ENCODE measurements at regions of chr5 and their contacts with region 1.

Region 1: DNA sequence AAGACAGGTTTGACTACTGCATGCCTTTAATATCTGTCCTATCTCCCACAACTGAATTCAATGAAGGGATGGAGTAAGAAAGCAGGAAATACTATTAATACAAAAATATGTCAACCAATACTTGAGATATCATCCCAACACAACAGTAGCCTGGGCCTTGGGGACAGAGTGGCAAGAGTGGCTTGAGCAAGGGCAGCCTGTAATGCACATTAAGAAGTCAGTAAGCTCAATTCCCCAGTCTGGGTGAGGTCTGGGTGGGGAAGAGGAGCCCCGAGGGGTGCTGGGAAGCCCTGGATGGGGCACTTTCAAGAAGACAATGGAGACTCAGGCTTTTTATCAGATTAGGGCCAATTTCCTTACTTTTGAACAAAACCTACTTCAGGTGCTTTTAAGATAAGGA is 25.1 kb downstream of the CARD6 start:
- DNase-seq: no peak
- ATAC-seq: no peak
- H3K4me3 ChIP-seq: no peak overlapping the region
- H3K4me3 Mint-ChIP-seq: no peak overlapping the region
- H3K27ac ChIP-seq: no peak overlapping the region
- H3K27ac Mint-ChIP-seq: no peak overlapping the region
- H3K4me1 ChIP-seq: no peaks in the 10 kb centered on the region
- H3K4me1 Mint-ChIP-seq: no peaks in the 10 kb centered on the region
- H3K27me3 ChIP-seq: no peaks in the 10 kb centered on the region
- H3K27me3 Mint-ChIP-seq: no peaks in the 10 kb centered on the region

Region 2: GRCh38 chr5:40842351-40842750 is 23.9 kb before region 1 on chr5:
- CTCF ChIA-PET with region 1: interaction called in 1 of 2 experiments, 5 read pairs
- POLR2A ChIA-PET with region 1: interaction called in 1 of 2 experiments, 11 read pairs
- DNase-seq: no peak
- ATAC-seq: no peak
- H3K4me3 ChIP-seq: no peak overlapping the region
- H3K4me3 Mint-ChIP-seq: peak overlapping the region in 1 of 3 donors; percentile 79
- H3K27ac ChIP-seq: no peak overlapping the region
- H3K27ac Mint-ChIP-seq: no peak overlapping the region
- H3K4me1 ChIP-seq: peaks cover 0 to 2% of the 10 kb centered on the region in 2 experiments
- H3K4me1 Mint-ChIP-seq: peaks cover 19 to 38% (median 24%) of the 10 kb centered on the region in 3 donors
- H3K27me3 ChIP-seq: peaks cover 0 to 3% of the 10 kb centered on the region in 2 experiments
- H3K27me3 Mint-ChIP-seq: peaks cover 4 to 10% of the 10 kb centered on the region in 2 donors

Region 3: GRCh38 chr5:40928886-40929448 is 62.7 kb after region 1 on chr5:
- CTCF ChIA-PET with region 1: no interaction called
- POLR2A ChIA-PET with region 1: no interaction called
- DNase-seq: no peak
- ATAC-seq: no peak
- H3K4me3 ChIP-seq: no peak overlapping the region
- H3K4me3 Mint-ChIP-seq: no peak overlapping the region
- H3K27ac ChIP-seq: no peak overlapping the region
- H3K27ac Mint-ChIP-seq: no peak overlapping the region
- H3K4me1 ChIP-seq: no peaks in the 10 kb centered on the region
- H3K4me1 Mint-ChIP-seq: no peaks in the 10 kb centered on the region
- H3K27me3 ChIP-seq: peaks cover 0 to 11% of the 10 kb centered on the region in 2 experiments
- H3K27me3 Mint-ChIP-seq: peaks cover 3 to 5% of the 10 kb centered on the region in 2 donors